ENCODE measurements at regions of chr10 and their contacts with region 1.

Region 1: GRCh38 chr10:12710594-12711349 is 290.7 kb downstream of the CCDC3 start:
- ATAC-seq: peak; percentile 78 to 86 (median 82)
- H3K4me3 ChIP-seq: no peak overlapping the region
- H3K27ac ChIP-seq: peak overlapping the region; percentile 66 to 67
- H3K4me1 ChIP-seq: peaks cover 16 to 20% of the 10 kb centered on the region in 2 donors

Region 2: GRCh38 chr10:12252882-12253546 is 457.8 kb before region 1 on chr10:
- in situ Hi-C with region 1: loop called in 5 of 9 experiments (anchors 10 to 25 kb)
- ATAC-seq: peak in 1 of 8 experiments; percentile 41
- H3K4me3 ChIP-seq: no peak overlapping the region
- H3K27ac ChIP-seq: no peak overlapping the region
- H3K4me1 ChIP-seq: no peaks in the 10 kb centered on the region

Region 3: GRCh38 chr10:12902135-12902572 is 191.4 kb after region 1 on chr10:
- in situ Hi-C with region 1: loop called in 1 of 9 experiments (anchors 25 kb)
- ATAC-seq: peak in 7 of 8 experiments; percentile 35 to 71 (median 59)
- H3K4me3 ChIP-seq: no peak overlapping the region
- H3K27ac ChIP-seq: no peak overlapping the region
- H3K4me1 ChIP-seq: no peaks in the 10 kb centered on the region

Region 4: GRCh38 chr10:13074561-13075451 is 364.0 kb after region 1 on chr10:
- in situ Hi-C with region 1: loop called in 3 of 9 experiments (anchors 25 kb)
- ATAC-seq: peak; percentile 85 to 100 (median 94)
- H3K4me3 ChIP-seq: no peak overlapping the region
- H3K27ac ChIP-seq: no peak overlapping the region
- H3K4me1 ChIP-seq: no peaks in the 10 kb centered on the region